Panc1 (cell line): ENCODE measurements at regions of chr5 and their contacts with region 1.

Region 1: DNA sequence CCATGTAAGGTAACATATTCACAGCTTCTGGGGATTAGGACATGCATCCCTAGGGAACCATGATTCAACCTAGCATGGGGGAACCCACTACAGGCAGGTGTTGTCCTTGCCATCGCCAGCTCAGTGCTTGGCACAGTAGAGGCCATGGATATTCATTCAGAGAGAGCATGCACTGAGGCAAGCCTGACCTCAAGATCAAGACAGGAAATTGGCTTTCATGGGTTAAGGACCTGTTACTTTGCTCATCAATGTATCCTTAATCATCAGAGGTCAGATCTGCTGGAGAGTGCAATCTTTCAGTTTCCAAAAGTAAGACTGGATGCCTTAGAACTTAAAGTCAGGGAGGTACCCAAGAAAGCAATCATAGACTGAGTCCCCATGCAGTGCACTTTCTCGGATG is 84.0 kb downstream of the KCNIP1 start:
- DNase-seq: no peak
- ATAC-seq: no peak
- H3K4me3 ChIP-seq: no peak overlapping the region
- H3K27ac ChIP-seq: no peak overlapping the region
- H3K4me1 ChIP-seq: no peaks in the 10 kb centered on the region
- H3K27me3 ChIP-seq: peaks cover 3% of the 10 kb centered on the region; the same call in 1 of the 2 replicates
- CTCF ChIP-seq: no peak

Region 2: GRCh38 chr5:170290498-170290897 is 297.3 kb before region 1 on chr5:
- CTCF ChIA-PET with region 1: no interaction called
- POLR2A ChIA-PET with region 1: interaction called, 20 read pairs
- in situ Hi-C with region 1: no loop called
- intact Hi-C with region 1: no loop called
- DNase-seq: no peak
- ATAC-seq: no peak
- H3K4me3 ChIP-seq: no peak overlapping the region
- H3K27ac ChIP-seq: no peak overlapping the region
- H3K4me1 ChIP-seq: no peaks in the 10 kb centered on the region
- H3K27me3 ChIP-seq: peaks cover 22% of the 10 kb centered on the region
- CTCF ChIP-seq: no peak; the same call in 1 of the 2 replicates